PC-9 (cell line): ENCODE measurements at regions of chr20 and their contacts with region 1.

Region 1: GRCh38 chr20:728248-728944 is 39.9 kb downstream of the SLC52A3 start:
- DNase-seq: peak in 1 of 2 experiments; percentile 67
- H3K4me3 ChIP-seq: no peak overlapping the region
- H3K27ac ChIP-seq: no peak overlapping the region
- H3K4me1 ChIP-seq: no peaks in the 10 kb centered on the region
- H3K27me3 ChIP-seq: peaks cover 42% of the 10 kb centered on the region
- CTCF ChIP-seq: peak; percentile 66

Region 2: DNA sequence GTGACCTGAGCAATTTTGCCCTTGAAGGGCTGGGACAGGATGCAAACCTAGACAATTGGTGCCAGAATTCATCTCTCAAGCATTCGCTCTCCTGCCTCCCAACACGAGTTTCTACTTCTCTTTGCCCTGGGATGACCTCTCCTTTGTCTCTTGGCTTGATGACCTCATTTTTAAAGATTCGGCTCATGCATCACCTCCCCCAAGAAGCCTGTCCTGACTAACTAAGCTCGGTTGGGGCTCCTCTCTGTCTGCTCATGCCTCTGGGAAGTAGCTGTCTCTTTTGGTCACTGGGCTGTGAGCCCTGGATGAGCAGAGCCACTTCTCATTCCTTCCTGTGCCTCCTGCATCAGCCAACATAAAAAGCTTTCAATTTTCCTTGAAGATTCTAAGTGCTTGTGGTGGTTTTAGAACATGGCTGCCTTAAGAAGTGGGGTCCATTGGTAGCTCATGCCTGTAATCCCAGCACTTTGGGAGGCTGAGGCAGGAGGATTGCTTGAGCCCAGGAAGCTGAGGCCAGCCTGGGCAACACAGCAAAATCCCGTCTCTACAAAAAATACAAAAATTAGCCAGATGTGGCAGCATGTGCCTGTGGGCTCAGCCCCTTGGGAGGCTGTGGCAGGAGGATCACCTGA is 107.2 kb before region 1 on chr20:
- CTCF ChIA-PET with region 1: interaction called, 13 read pairs
- POLR2A ChIA-PET with region 1: no interaction called
- intact Hi-C with region 1: no loop called
- DNase-seq: no peak
- H3K4me3 ChIP-seq: no peak overlapping the region
- H3K27ac ChIP-seq: no peak overlapping the region
- H3K4me1 ChIP-seq: no peaks in the 10 kb centered on the region
- H3K27me3 ChIP-seq: peaks cover 86% of the 10 kb centered on the region
- CTCF ChIP-seq: no peak

Region 3: DNA sequence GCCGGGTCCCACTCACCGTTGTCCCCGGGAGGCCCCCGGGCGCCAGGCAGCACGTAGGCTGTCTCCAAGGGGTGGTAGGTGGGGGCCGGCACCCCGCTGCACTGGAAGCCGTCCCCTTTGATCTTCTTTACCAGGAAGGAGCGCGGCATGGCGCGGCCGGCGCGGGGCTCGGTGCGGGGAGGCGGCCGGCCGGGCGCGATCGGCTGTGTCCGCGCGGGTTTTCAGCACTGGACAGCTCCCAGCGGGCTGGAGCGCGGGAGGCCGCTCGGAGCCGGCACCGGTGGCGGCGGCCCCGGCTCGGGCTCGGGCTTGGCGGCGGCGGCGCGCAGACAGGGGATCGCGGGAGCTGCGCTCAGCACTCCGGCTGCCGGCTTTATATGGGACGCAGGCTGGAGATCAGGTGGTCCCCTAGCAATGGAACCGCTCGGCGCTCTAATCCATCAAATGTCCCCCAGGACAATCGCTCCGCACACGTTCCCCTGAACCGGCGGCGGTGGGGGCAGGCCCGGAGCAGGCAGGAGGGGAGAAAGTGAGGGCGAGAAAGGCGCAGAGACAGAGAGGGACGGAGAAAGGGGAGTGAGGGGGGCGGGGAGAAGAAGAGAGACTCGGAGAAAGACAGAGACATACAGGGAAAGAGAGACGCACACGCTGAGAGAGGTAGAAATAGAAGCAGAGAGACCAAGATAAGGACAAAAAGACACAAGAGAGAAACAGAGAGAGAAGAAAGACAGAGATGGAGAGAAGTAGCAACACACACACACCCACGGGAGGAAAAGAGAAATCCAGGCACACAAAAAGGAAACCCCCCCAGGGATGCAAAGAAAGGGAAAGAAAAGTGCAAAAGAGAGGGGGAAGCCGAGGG is 52.7 kb before region 1 on chr20 and contains the start of gene SCRT2:
- CTCF ChIA-PET with region 1: no interaction called
- POLR2A ChIA-PET with region 1: no interaction called
- intact Hi-C with region 1: loop called (anchors 10 kb)
- DNase-seq: peak; percentile 32 to 75
- H3K4me3 ChIP-seq: no peak within 1 kb of the TSS
- H3K27ac ChIP-seq: no peak within 1 kb of the TSS
- H3K4me1 ChIP-seq: no peaks in the 10 kb centered on the region
- H3K27me3 ChIP-seq: peaks cover 70% of the 10 kb centered on the region
- CTCF ChIP-seq: no peak
- total RNA-seq, gene SCRT2: not detected in 2 replicates

Region 4: DNA sequence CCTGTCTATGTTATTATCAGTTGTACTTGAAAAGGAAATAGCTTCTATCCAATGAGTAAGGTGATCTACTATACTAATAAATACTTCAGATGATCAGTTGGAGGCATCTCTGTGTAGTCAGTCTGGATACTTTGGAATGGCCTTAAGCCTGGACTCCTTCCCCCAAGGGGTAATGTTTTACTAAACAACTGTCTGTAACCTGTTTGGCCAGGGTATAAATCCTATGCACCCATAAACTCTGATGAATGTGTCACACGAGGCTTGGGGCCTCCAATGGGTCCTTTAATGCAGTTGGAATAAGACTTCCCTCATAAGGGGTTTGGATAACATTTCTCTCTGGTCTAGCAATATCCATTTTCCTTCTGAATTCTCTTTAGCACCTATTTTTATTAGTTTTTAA is 59.4 kb after region 1 on chr20:
- CTCF ChIA-PET with region 1: no interaction called
- POLR2A ChIA-PET with region 1: no interaction called
- intact Hi-C with region 1: no loop called
- DNase-seq: no peak
- H3K4me3 ChIP-seq: no peak overlapping the region
- H3K27ac ChIP-seq: no peak overlapping the region
- H3K4me1 ChIP-seq: no peaks in the 10 kb centered on the region
- H3K27me3 ChIP-seq: peaks cover 35% of the 10 kb centered on the region
- CTCF ChIP-seq: no peak

Region 5: DNA sequence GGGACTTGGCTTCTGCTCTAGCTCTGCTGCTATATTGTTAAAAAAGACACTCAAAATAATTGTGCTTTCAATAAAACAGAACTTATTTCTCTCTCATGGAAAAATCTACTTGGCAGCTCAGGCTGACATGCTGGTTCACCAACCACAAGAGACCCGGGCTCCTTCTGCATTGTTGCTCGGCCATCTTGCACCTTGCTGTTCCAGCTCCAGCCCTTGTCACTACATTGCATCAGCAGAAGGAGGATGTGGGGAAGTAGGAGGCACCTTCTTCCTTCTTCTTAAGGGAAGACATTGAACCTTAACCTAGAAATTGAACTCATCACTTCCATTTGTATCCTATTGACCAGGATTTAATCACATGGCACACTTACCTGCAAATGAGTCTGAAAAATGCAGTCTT is 468.2 kb after region 1 on chr20:
- CTCF ChIA-PET with region 1: no interaction called
- POLR2A ChIA-PET with region 1: no interaction called
- intact Hi-C with region 1: no loop called
- DNase-seq: no peak
- H3K4me3 ChIP-seq: no peak overlapping the region
- H3K27ac ChIP-seq: no peak overlapping the region
- H3K4me1 ChIP-seq: no peaks in the 10 kb centered on the region
- H3K27me3 ChIP-seq: peaks cover 26% of the 10 kb centered on the region
- CTCF ChIP-seq: no peak